ENCODE measurements at regions of chr6 and their contacts with region 1.

Region 1: DNA sequence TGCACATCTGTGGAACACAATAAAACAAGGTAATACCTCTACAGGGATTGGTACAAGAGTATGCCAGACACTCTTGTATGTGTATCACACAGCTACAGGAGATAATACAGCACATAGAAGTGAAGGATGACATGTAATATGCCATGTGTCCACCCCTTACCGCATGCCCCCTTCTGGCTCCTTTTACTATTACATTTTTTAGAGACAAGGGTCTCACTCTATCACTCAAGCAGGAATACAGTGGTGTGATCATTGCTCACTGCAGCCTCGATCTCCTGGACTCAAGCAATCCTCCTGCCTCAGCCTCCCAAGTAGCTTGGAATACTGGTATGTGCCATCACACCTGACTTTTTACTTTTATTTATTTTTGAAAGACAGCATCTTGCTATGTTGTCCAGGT is 4.2 kb upstream of the NCR3 start:
- DNase-seq: peak in 1 of 2 donors; percentile 52
- H3K4me3 ChIP-seq: no peak overlapping the region
- H3K27ac ChIP-seq: no peak overlapping the region
- H3K4me1 ChIP-seq: peaks cover 0 to 9% (median 0%) of the 10 kb centered on the region in 4 donors
- H3K27me3 ChIP-seq: no peaks in the 10 kb centered on the region
- CTCF ChIP-seq: peak in 1 of 7 experiments; percentile 10
- EP300 ChIP-seq: no peak
- POLR2A ChIP-seq: no peak

Region 2: GRCh38 chr6:31546962-31547726 is 49.9 kb before region 1 on chr6 and contains the start of gene NFKBIL1:
- intact Hi-C with region 1: loop called (anchors 5 kb)
- DNase-seq: peak; percentile 95 to 99
- H3K4me3 ChIP-seq: peak within 1 kb of the TSS; percentile 43 to 54 (median 50)
- H3K27ac ChIP-seq: peak within 1 kb of the TSS; percentile 86 to 89 (median 87)
- H3K4me1 ChIP-seq: peaks cover 13 to 50% (median 38%) of the 10 kb centered on the region in 4 donors
- H3K27me3 ChIP-seq: no peaks in the 10 kb centered on the region
- CTCF ChIP-seq: peak in 1 of 7 experiments; percentile 21
- EP300 ChIP-seq: no peak
- POLR2A ChIP-seq: no peak
- total RNA-seq, gene NFKBIL1: 0.45 to 51.9 (median 13.6) TPM

Measured in stomach (tissue), 19 donors.